Calu3 (cell line): ENCODE measurements at regions of chr18 and their contacts with region 1.

Region 1: DNA sequence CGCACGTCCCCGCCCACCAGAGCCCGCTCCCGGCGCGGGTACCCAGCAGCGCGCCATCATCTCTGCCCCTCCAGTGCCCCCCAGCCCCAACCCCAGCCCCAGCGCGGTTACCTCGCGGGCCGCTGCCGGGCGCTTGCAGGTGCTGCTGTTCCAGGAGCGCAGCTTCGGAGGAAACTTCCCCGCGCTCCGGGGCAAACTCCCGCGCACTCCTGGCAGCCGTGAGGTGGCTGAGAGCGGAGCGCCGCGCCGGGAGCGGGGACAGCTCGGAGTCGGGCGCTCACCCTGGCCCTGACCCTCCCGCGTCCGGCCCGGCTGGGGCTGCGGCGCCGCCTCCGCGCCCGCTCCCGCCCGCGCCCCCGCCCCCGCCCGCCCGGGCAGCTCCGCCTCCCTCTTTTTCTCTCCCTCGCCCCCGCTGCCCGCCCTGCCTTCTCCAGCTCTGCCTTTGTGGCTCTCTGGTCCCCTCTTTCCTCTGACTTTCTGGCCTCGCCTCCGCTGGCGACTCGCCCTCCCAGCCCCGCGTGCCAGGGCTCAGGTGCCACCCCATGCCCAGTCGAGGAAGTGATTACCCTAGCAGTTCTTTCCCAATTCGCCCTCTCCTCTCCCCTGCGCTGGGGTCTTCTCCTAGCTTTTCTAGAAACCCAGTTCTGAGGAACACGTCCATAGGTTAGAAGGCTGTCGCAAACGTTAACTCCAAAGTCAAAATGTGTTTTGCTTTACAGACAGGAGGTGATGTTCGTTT is at the start of gene CHST9:
- DNase-seq: peak; percentile 79
- H3K4me3 Mint-ChIP-seq: peak within 1 kb of the TSS; percentile 99
- H3K27ac Mint-ChIP-seq: peak within 1 kb of the TSS; percentile 92
- H3K4me1 Mint-ChIP-seq: peaks cover 64% of the 10 kb centered on the region
- H3K27me3 Mint-ChIP-seq: no peaks in the 10 kb centered on the region
- CTCF ChIP-seq: no peak
- total RNA-seq, gene CHST9: 50.4 and 56.9 TPM in 2 replicates

Region 2: GRCh38 chr18:26888259-26888658 is 296.9 kb before region 1 on chr18:
- CTCF ChIA-PET with region 1: no interaction called
- intact Hi-C with region 1: no loop called
- DNase-seq: no peak
- H3K4me3 Mint-ChIP-seq: no peak overlapping the region
- H3K27ac Mint-ChIP-seq: no peak overlapping the region
- H3K4me1 Mint-ChIP-seq: no peaks in the 10 kb centered on the region
- H3K27me3 Mint-ChIP-seq: no peaks in the 10 kb centered on the region
- CTCF ChIP-seq: no peak

Region 3: GRCh38 chr18:27005589-27005988 is 179.6 kb before region 1 on chr18:
- CTCF ChIA-PET with region 1: no interaction called
- intact Hi-C with region 1: no loop called
- DNase-seq: peak; percentile 22
- H3K4me3 Mint-ChIP-seq: no peak overlapping the region
- H3K27ac Mint-ChIP-seq: no peak overlapping the region
- H3K4me1 Mint-ChIP-seq: peaks cover 22% of the 10 kb centered on the region
- H3K27me3 Mint-ChIP-seq: no peaks in the 10 kb centered on the region
- CTCF ChIP-seq: peak; percentile 68

Region 4: GRCh38 chr18:27017901-27018500 is 167.2 kb before region 1 on chr18:
- CTCF ChIA-PET with region 1: interaction called, 5 read pairs
- intact Hi-C with region 1: loop called (anchors 2 kb)
- DNase-seq: peak; percentile 8
- H3K4me3 Mint-ChIP-seq: no peak overlapping the region
- H3K27ac Mint-ChIP-seq: no peak overlapping the region
- H3K4me1 Mint-ChIP-seq: peaks cover 39% of the 10 kb centered on the region
- H3K27me3 Mint-ChIP-seq: no peaks in the 10 kb centered on the region
- CTCF ChIP-seq: peak; percentile 57

Region 5: GRCh38 chr18:27109451-27109850 is 75.7 kb before region 1 on chr18:
- CTCF ChIA-PET with region 1: no interaction called
- intact Hi-C with region 1: no loop called
- DNase-seq: no peak
- H3K4me3 Mint-ChIP-seq: no peak overlapping the region
- H3K27ac Mint-ChIP-seq: peak overlapping the region; percentile 27
- H3K4me1 Mint-ChIP-seq: peaks cover 8% of the 10 kb centered on the region
- H3K27me3 Mint-ChIP-seq: no peaks in the 10 kb centered on the region
- CTCF ChIP-seq: no peak

Region 6: DNA sequence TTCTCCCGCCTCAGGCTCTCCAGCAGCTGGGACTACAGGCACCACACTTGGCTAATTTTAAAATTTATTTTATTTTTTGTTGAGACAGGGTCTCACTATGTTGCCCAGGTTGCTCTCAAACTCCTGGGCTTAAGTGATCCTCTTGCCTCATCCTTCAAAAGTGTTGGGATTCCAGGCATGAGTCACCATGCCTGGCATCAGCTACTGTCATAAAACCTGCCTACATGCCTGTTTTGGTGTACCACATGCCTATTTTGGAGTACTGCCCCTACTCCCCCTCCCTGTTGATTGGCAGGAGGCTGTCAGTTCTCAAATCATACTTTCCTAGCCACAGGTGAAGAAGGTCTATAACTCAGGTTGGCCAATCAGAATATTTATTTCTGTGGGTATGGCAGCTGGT is 64.1 kb before region 1 on chr18:
- CTCF ChIA-PET with region 1: interaction called, 3 read pairs
- intact Hi-C with region 1: loop called (anchors 2 kb)
- DNase-seq: no peak
- H3K4me3 Mint-ChIP-seq: no peak overlapping the region
- H3K27ac Mint-ChIP-seq: peak overlapping the region; percentile 86
- H3K4me1 Mint-ChIP-seq: peaks cover 54% of the 10 kb centered on the region
- H3K27me3 Mint-ChIP-seq: no peaks in the 10 kb centered on the region
- CTCF ChIP-seq: no peak

Region 7: GRCh38 chr18:27164905-27165304 is 20.3 kb before region 1 on chr18:
- CTCF ChIA-PET with region 1: no interaction called
- intact Hi-C with region 1: no loop called
- DNase-seq: no peak
- H3K4me3 Mint-ChIP-seq: no peak overlapping the region
- H3K27ac Mint-ChIP-seq: no peak overlapping the region
- H3K4me1 Mint-ChIP-seq: peaks cover 24% of the 10 kb centered on the region
- H3K27me3 Mint-ChIP-seq: no peaks in the 10 kb centered on the region
- CTCF ChIP-seq: no peak

Region 8: GRCh38 chr18:27226556-27227075 is 41.4 kb after region 1 on chr18:
- CTCF ChIA-PET with region 1: no interaction called
- intact Hi-C with region 1: loop called (anchors 2 kb)
- DNase-seq: peak; percentile 38
- H3K4me3 Mint-ChIP-seq: peak overlapping the region; percentile 13
- H3K27ac Mint-ChIP-seq: peak overlapping the region; percentile 64
- H3K4me1 Mint-ChIP-seq: peaks cover 53% of the 10 kb centered on the region
- H3K27me3 Mint-ChIP-seq: no peaks in the 10 kb centered on the region
- CTCF ChIP-seq: no peak